Mammary epithelial cell (primary cell): ENCODE measurements at regions of chr4 and their contacts with region 1.

Region 1: DNA sequence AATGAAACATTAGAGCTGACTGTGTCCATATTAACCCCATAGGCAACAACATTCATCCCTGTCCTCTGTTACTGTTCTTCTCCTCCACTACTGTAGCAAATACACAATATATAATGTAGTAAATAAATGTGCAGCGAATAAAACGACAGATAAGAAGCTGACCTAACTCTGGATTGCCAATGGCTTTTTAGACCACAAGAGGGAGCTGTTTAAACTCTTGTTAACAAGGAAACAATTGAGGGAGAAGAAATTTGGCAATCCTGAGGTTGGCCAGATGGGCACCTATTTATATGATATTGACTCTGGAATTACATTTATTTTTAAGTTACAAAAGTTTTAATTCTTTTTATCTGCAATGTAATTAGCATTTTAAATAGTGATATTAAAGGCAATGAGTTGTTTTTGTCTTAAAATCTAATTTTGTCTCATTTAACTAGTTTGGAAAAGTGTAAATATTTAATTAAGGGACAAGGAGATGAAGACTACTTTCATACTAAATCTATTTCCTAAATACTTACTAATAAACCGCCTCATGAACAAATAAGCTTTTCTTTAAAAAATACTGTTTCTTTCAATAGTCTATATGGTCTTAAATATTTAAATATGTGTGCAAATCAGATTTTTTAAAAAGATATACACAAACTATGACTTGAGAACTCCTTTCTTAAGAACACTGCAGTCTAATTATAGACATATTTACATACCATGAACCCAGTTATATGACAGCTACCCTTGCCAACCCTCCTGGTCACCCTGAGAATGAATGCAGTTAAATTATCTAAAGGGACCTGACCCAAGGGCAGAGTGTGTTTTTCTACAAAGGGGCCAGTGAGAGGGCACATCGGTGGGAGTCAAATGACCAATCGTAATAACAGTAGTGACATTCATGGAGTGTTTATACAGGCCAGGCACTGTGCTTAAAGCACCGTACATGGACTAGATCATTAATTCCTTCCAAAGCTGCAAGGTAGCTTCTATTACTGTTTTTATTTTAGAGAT is 52.9 kb upstream of the HPF1 start:
- DNase-seq: peak; percentile 55
- H3K4me3 ChIP-seq: no peak overlapping the region
- H3K27ac ChIP-seq: no peak overlapping the region
- H3K4me1 ChIP-seq: no peaks in the 10 kb centered on the region
- H3K27me3 ChIP-seq: no peaks in the 10 kb centered on the region
- CTCF ChIP-seq: peak; percentile 81 to 83

Region 2: DNA sequence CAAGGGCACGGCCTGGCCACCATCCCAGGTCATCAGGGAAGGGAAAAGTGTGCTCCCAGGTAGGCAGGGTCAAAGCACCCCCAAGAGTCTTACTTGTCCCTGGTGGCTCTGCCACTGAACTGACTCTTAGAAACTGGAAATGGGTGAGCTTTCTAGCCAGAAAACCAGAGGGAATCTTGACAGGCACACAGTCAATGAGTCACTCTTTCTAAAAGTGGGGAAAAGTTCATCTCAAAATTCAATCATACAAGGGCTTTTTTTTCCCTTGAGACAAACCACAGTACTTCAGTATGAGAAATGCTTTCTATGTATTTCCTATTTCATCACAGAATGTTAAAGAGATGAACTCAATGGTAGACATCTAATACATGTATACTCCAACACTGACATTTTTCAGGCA is 65.3 kb before region 1 on chr4:
- CTCF ChIA-PET with region 1: interaction called, 10 read pairs
- dilution Hi-C with region 1: loop called (anchors 10 kb)
- in situ Hi-C with region 1: no loop called
- intact Hi-C with region 1: no loop called
- DNase-seq: peak; percentile 60
- H3K4me3 ChIP-seq: no peak overlapping the region
- H3K27ac ChIP-seq: no peak overlapping the region
- H3K4me1 ChIP-seq: no peaks in the 10 kb centered on the region
- H3K27me3 ChIP-seq: no peaks in the 10 kb centered on the region
- CTCF ChIP-seq: no peak

Region 3: GRCh38 chr4:170008371-170008770 is 197.7 kb after region 1 on chr4:
- CTCF ChIA-PET with region 1: no interaction called
- dilution Hi-C with region 1: no loop called
- in situ Hi-C with region 1: no loop called
- intact Hi-C with region 1: loop called (anchors 1 kb)
- DNase-seq: peak; percentile 8
- H3K4me3 ChIP-seq: no peak overlapping the region
- H3K27ac ChIP-seq: no peak overlapping the region
- H3K4me1 ChIP-seq: no peaks in the 10 kb centered on the region
- H3K27me3 ChIP-seq: no peaks in the 10 kb centered on the region
- CTCF ChIP-seq: peak; percentile 5 to 10

Region 4: GRCh38 chr4:170047771-170048354 is 237.2 kb after region 1 on chr4:
- CTCF ChIA-PET with region 1: interaction called, 7 read pairs
- dilution Hi-C with region 1: loop called (anchors 5 kb)
- in situ Hi-C with region 1: no loop called
- intact Hi-C with region 1: loop called (anchors 1 kb)
- DNase-seq: peak; percentile 25
- H3K4me3 ChIP-seq: no peak overlapping the region
- H3K27ac ChIP-seq: no peak overlapping the region
- H3K4me1 ChIP-seq: no peaks in the 10 kb centered on the region
- H3K27me3 ChIP-seq: peaks cover 1% of the 10 kb centered on the region
- CTCF ChIP-seq: peak; percentile 78 to 88

Region 5: GRCh38 chr4:170089668-170090351 is 279.2 kb after region 1 on chr4 and contains the start of gene AADAT:
- CTCF ChIA-PET with region 1: no interaction called
- dilution Hi-C with region 1: no loop called
- in situ Hi-C with region 1: no loop called
- intact Hi-C with region 1: loop called (anchors 1 kb)
- DNase-seq: peak; percentile 65
- H3K4me3 ChIP-seq: peak within 1 kb of the TSS; percentile 52 to 78 (median 65)
- H3K27ac ChIP-seq: peak within 1 kb of the TSS; percentile 43
- H3K4me1 ChIP-seq: peaks cover 14% of the 10 kb centered on the region
- H3K27me3 ChIP-seq: no peaks in the 10 kb centered on the region
- CTCF ChIP-seq: peak; percentile 52 to 73
- total RNA-seq, gene AADAT: 5.5 to 8.3 TPM